Mammary epithelial cell (primary cell): ENCODE measurements at regions of chr17 and their contacts with region 1.

Region 1: GRCh38 chr17:71188811-71189492 is 931.9 kb upstream of the SOX9 start:
- DNase-seq: peak; percentile 90
- H3K4me3 ChIP-seq: peak overlapping the region in 1 of 3 experiments; percentile 1
- H3K27ac ChIP-seq: peak overlapping the region; percentile 94
- H3K4me1 ChIP-seq: peaks cover 30% of the 10 kb centered on the region
- H3K27me3 ChIP-seq: no peaks in the 10 kb centered on the region
- CTCF ChIP-seq: no peak

Region 2: GRCh38 chr17:70848785-70849184 is 340.2 kb before region 1 on chr17:
- CTCF ChIA-PET with region 1: no interaction called
- dilution Hi-C with region 1: no loop called
- in situ Hi-C with region 1: no loop called
- intact Hi-C with region 1: no loop called
- DNase-seq: no peak
- H3K4me3 ChIP-seq: no peak overlapping the region
- H3K27ac ChIP-seq: no peak overlapping the region
- H3K4me1 ChIP-seq: no peaks in the 10 kb centered on the region
- H3K27me3 ChIP-seq: no peaks in the 10 kb centered on the region
- CTCF ChIP-seq: no peak

Region 3: GRCh38 chr17:71208111-71208704 is 19.3 kb after region 1 on chr17:
- CTCF ChIA-PET with region 1: no interaction called
- dilution Hi-C with region 1: no loop called
- in situ Hi-C with region 1: no loop called
- intact Hi-C with region 1: loop called (anchors 1 kb)
- DNase-seq: peak; percentile 100
- H3K4me3 ChIP-seq: no peak overlapping the region
- H3K27ac ChIP-seq: peak overlapping the region; percentile 99
- H3K4me1 ChIP-seq: peaks cover 14% of the 10 kb centered on the region
- H3K27me3 ChIP-seq: no peaks in the 10 kb centered on the region
- CTCF ChIP-seq: no peak

Region 4: GRCh38 chr17:71460943-71461342 is 272.0 kb after region 1 on chr17:
- CTCF ChIA-PET with region 1: no interaction called
- dilution Hi-C with region 1: no loop called
- in situ Hi-C with region 1: no loop called
- intact Hi-C with region 1: loop called (anchors 5 kb)
- DNase-seq: no peak
- H3K4me3 ChIP-seq: no peak overlapping the region
- H3K27ac ChIP-seq: no peak overlapping the region
- H3K4me1 ChIP-seq: peaks cover 41% of the 10 kb centered on the region
- H3K27me3 ChIP-seq: no peaks in the 10 kb centered on the region
- CTCF ChIP-seq: peak; percentile 20 to 36